Activated CD4-positive, alpha-beta memory T cell treated with anti-CD3 and anti-CD28 coated beads, Interleukin-2, amount 10 ng/mL, durations not matched to agents 7 days and 5 days (primary cell): ENCODE measurements at regions of chr5 and their contacts with region 1.

Region 1: GRCh38 chr5:32232441-32233219 is 58.5 kb upstream of the GOLPH3 start:
- DNase-seq: peak; percentile 81
- H3K4me3 Mint-ChIP-seq: no peak overlapping the region
- H3K27ac Mint-ChIP-seq: no peak overlapping the region
- H3K4me1 Mint-ChIP-seq: peaks cover 8% of the 10 kb centered on the region
- H3K27me3 Mint-ChIP-seq: no peaks in the 10 kb centered on the region

Region 2: GRCh38 chr5:32138839-32139493 is 93.7 kb before region 1 on chr5:
- CTCF ChIA-PET with region 1: no interaction called
- POLR2A ChIA-PET with region 1: no interaction called
- DNase-seq: peak; percentile 54
- H3K4me3 Mint-ChIP-seq: no peak overlapping the region
- H3K27ac Mint-ChIP-seq: peak overlapping the region; percentile 59
- H3K4me1 Mint-ChIP-seq: peaks cover 13% of the 10 kb centered on the region
- H3K27me3 Mint-ChIP-seq: no peaks in the 10 kb centered on the region

Region 3: DNA sequence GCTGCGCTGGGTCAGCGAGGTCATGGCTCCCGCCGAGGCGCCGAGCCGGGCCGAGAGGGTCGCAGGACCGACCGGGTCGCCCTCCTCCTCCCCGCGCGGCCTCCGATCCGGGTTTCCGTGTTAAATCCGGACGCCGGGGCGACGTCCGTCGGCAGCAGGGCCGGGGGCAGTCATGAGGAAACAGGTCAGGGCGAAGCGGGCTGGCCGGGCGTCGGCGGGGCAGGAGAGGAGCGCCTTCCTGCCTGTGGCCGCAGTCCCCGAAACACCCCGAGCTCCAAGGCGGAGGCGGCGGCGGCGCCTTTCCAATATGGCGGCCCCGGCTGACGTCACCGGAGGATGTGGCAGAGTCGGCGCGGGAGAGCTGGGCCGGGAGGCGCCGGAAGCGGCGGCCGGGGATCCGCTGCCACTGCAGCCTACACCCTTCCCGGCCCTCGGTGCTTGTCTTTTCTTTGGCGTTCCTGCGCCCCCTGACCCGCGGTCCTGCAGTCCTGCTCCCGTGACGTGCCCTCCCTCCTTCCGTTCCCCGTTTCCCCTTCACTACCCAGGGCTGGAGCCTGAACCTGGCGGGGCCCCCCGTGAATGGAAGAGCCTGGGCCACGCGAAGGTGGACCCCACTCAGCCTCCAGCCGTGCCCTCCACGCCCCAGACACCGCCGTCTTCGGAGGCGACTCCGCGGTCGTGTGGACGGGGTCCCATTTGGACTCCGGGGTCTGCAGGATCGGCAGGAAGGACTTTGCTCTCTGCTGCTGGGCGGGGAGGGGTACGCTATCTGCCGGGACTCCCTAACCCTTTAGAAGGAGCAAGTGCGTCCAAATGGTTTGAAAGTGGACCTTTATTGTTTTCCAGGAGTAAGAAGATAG is 58.4 kb before region 1 on chr5 and contains the start of gene GOLPH3:
- CTCF ChIA-PET with region 1: interaction called, 7 read pairs
- POLR2A ChIA-PET with region 1: interaction called, 20 read pairs
- DNase-seq: peak; percentile 95
- H3K4me3 Mint-ChIP-seq: peak within 1 kb of the TSS; percentile 99
- H3K27ac Mint-ChIP-seq: peak within 1 kb of the TSS; percentile 99
- H3K4me1 Mint-ChIP-seq: peaks cover 40% of the 10 kb centered on the region
- H3K27me3 Mint-ChIP-seq: peaks cover 2% of the 10 kb centered on the region
- total RNA-seq, gene GOLPH3: 81.6 to 86.8 TPM

Region 4: GRCh38 chr5:32251871-32252458 is 19.3 kb after region 1 on chr5:
- CTCF ChIA-PET with region 1: interaction called, 11 read pairs
- POLR2A ChIA-PET with region 1: no interaction called
- DNase-seq: no peak
- H3K4me3 Mint-ChIP-seq: no peak overlapping the region
- H3K27ac Mint-ChIP-seq: no peak overlapping the region
- H3K4me1 Mint-ChIP-seq: no peaks in the 10 kb centered on the region
- H3K27me3 Mint-ChIP-seq: no peaks in the 10 kb centered on the region

Region 5: DNA sequence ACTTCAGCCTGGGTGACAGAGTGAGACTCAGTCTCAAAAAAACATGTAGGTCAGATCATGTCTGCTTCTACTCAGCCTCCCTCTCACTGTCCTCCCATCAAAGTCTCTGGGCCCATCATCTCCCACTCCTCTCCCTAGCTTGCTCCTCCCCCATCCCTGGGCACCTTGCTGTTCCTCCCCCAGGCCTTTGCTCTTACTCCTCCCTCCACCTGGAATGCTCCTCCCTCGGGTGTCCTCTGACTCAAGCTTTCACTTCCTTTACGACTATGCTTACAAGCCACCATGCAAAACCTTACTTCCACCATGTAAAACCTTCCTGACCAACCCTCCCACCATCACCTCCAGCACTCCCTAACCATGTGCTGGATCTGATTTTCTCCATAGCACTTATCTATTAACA is 28.6 kb after region 1 on chr5:
- CTCF ChIA-PET with region 1: interaction called, 13 read pairs
- POLR2A ChIA-PET with region 1: no interaction called
- DNase-seq: peak; percentile 30
- H3K4me3 Mint-ChIP-seq: no peak overlapping the region
- H3K27ac Mint-ChIP-seq: peak overlapping the region; percentile 51
- H3K4me1 Mint-ChIP-seq: peaks cover 16% of the 10 kb centered on the region
- H3K27me3 Mint-ChIP-seq: no peaks in the 10 kb centered on the region

Region 6: GRCh38 chr5:32329308-32329834 is 96.7 kb after region 1 on chr5:
- CTCF ChIA-PET with region 1: interaction called, 173 read pairs
- POLR2A ChIA-PET with region 1: interaction called, 12 read pairs
- DNase-seq: peak; percentile 64
- H3K4me3 Mint-ChIP-seq: no peak overlapping the region
- H3K27ac Mint-ChIP-seq: no peak overlapping the region
- H3K4me1 Mint-ChIP-seq: peaks cover 2% of the 10 kb centered on the region
- H3K27me3 Mint-ChIP-seq: no peaks in the 10 kb centered on the region

Region 7: DNA sequence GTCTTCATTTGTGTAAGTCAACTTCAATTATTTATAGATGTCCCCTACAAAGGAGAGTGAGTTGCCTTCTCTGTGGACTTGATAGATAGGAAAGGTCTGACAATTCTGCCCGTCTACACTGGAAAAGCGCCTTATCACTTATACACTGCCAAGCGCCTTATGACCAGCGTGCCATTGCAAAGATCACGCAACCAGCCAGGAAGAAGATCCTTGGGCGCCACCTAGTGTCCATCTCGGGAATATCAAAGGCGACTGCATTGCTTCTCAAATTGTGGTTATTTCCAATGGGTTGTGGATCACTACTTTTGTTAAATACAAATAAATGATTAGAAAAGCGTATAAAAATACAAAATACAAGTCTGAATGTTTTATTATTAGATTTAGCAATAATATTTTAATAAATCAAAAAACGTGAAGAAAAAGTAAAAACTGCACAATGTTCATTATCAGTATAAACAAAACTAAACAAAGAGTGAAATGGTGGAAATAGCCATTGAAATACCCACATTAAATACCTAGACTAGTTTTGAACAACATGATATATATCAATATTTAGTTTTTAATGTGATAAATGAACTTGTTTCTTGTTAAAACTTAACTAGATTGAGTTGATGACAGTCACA is 380.5 kb after region 1 on chr5:
- CTCF ChIA-PET with region 1: interaction called, 20 read pairs
- POLR2A ChIA-PET with region 1: no interaction called
- DNase-seq: peak; percentile 86
- H3K4me3 Mint-ChIP-seq: no peak overlapping the region
- H3K27ac Mint-ChIP-seq: no peak overlapping the region
- H3K4me1 Mint-ChIP-seq: peaks cover 7% of the 10 kb centered on the region
- H3K27me3 Mint-ChIP-seq: no peaks in the 10 kb centered on the region